Keratinocyte (primary cell): ENCODE measurements at regions of chr11 and their contacts with region 1.

Region 1: DNA sequence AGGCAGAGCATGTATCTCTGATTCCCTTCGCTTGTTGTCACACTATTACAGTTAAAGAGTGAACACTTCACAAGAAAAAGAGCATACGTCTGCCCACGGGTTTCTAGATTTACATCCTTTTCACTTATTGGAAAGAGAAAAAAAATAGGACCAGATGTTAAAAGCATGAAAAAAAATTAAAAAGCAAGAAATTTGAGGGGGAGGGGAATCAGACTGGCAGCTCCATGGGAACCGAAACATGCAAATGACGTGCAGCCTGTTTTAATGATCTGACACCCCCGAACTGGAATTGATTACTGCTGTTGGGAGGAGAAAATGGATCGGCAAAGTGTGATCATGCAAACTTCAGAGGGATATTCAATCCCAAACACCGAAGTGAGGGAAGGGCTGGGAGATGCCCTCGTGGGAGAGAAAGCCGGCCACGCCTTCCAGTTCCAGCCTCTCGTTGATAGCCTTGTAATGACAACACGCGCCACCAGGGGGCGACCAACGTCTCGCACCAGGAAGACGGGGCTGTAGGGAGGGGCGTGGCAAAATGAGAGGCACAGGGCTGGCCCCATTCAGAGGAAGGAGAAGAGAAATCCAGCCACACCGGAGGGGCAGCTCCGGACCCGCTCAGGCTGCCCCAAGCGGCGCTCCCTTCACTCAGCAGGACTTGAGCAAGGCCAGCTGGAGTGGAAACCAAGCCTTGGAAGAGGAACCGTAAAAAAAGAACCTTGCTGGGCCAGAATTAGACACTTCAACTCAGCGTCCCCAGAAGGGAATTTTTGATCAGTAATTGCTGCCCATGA is 53.8 kb upstream of the SYT13 start:
- DNase-seq: peak; percentile 77
- H3K4me3 ChIP-seq: no peak overlapping the region
- H3K27ac ChIP-seq: no peak overlapping the region
- H3K4me1 ChIP-seq: peaks cover 5% of the 10 kb centered on the region
- H3K27me3 ChIP-seq: no peaks in the 10 kb centered on the region
- CTCF ChIP-seq: peak; percentile 86 to 91 (median 89)

Region 2: GRCh38 chr11:44936525-44936924 is 403.4 kb before region 1 on chr11:
- dilution Hi-C with region 1: loop called (anchors 25 kb)
- DNase-seq: peak; percentile 53
- H3K4me3 ChIP-seq: no peak overlapping the region
- H3K27ac ChIP-seq: no peak overlapping the region
- H3K4me1 ChIP-seq: no peaks in the 10 kb centered on the region
- H3K27me3 ChIP-seq: no peaks in the 10 kb centered on the region
- CTCF ChIP-seq: peak; percentile 81 to 95 (median 85)

Region 3: GRCh38 chr11:45617871-45618601 is 278.1 kb after region 1 on chr11:
- dilution Hi-C with region 1: no loop called
- DNase-seq: no peak
- H3K4me3 ChIP-seq: no peak overlapping the region
- H3K27ac ChIP-seq: no peak overlapping the region
- H3K4me1 ChIP-seq: no peaks in the 10 kb centered on the region
- H3K27me3 ChIP-seq: no peaks in the 10 kb centered on the region
- CTCF ChIP-seq: no peak